G401 (cell line): ENCODE measurements at regions of chr1 and their contacts with region 1.

Region 1: GRCh38 chr1:23194119-23194984 is 22.9 kb downstream of the HTR1D start:
- DNase-seq: no peak

Region 2: GRCh38 chr1:23084880-23085279 is 109.5 kb before region 1 on chr1:
- in situ Hi-C with region 1: loop called (anchors 5 kb)
- DNase-seq: no peak

Region 3: GRCh38 chr1:23114424-23115079 is 79.8 kb before region 1 on chr1:
- in situ Hi-C with region 1: no loop called
- DNase-seq: no peak